Activated CD4-positive, alpha-beta T cell treated with anti-CD3 and anti-CD28 coated beads, Interleukin-2, amount 10 ng/mL, durations not matched to agents 24 days and 14 days (primary cell): ENCODE measurements at regions of chr15 and their contacts with region 1.

Region 1: DNA sequence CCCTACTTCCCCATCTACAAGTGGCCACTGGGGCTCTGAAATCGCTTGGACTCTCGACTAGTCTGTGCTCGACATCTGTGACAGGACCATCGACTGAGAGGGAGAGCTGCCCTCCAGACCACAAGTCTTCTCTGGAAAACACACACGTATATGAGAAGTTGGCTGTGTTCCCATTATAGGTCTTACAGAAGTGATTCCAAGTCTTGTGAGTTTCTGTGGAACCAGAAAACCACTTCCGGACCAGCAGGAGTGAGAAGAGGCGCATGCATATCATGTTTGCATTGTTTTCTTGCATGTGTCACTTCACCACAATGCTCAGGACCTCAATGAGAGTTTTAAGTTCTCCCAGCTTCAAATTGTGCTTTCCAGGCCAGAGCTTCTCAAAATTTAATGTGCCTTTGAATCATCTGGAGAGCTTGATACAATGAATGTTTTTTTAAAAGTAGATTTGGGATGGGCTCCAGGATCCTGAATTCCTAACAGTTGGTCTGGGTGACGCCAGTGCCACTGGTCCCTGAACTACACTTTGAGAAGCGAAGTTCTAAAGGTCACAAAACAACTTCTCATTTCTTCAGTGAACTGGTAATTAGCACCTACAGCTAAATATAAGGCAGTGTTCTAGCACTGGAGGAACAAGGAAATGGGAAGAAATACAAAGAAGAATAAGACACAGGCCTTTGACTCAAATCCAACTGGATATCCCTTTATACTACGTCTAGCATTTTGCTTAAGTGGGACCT is 15.7 kb downstream of the LIPC start:
- DNase-seq: no peak
- H3K4me3 Mint-ChIP-seq: no peak overlapping the region
- H3K27ac Mint-ChIP-seq: peak overlapping the region; percentile 84
- H3K4me1 Mint-ChIP-seq: peaks cover 19% of the 10 kb centered on the region
- H3K27me3 Mint-ChIP-seq: no peaks in the 10 kb centered on the region

Region 2: GRCh38 chr15:58410353-58410752 is 37.1 kb before region 1 on chr15:
- intact Hi-C with region 1: no loop called
- DNase-seq: peak; percentile 80
- H3K4me3 Mint-ChIP-seq: peak overlapping the region; percentile 88
- H3K27ac Mint-ChIP-seq: peak overlapping the region; percentile 92
- H3K4me1 Mint-ChIP-seq: peaks cover 28% of the 10 kb centered on the region
- H3K27me3 Mint-ChIP-seq: no peaks in the 10 kb centered on the region

Region 3: DNA sequence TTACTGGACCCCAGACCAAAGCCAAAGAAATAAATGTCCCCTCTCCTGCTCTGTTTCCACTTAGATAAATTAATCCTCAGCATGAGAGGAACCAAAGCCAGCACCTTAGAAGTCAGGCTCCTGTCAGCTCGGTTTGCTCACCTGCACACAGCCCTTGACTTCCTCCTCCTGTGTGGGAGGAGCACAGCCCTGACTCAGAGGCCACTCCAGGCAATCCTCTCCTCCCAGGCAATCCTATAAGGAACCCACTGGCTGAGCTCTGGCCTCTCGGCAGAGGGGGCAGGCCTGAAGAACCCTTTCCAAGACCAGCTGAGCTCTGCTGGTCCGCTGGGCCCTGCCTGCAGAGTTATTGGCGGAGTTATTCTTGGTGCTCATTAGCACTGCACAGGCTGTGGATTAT is 15.1 kb after region 1 on chr15:
- intact Hi-C with region 1: loop called (anchors 2 kb)
- DNase-seq: no peak
- H3K4me3 Mint-ChIP-seq: no peak overlapping the region
- H3K27ac Mint-ChIP-seq: peak overlapping the region; percentile 10
- H3K4me1 Mint-ChIP-seq: peaks cover 71% of the 10 kb centered on the region
- H3K27me3 Mint-ChIP-seq: no peaks in the 10 kb centered on the region